ENCODE measurements at regions of chr16 and their contacts with region 1.

Region 1: DNA sequence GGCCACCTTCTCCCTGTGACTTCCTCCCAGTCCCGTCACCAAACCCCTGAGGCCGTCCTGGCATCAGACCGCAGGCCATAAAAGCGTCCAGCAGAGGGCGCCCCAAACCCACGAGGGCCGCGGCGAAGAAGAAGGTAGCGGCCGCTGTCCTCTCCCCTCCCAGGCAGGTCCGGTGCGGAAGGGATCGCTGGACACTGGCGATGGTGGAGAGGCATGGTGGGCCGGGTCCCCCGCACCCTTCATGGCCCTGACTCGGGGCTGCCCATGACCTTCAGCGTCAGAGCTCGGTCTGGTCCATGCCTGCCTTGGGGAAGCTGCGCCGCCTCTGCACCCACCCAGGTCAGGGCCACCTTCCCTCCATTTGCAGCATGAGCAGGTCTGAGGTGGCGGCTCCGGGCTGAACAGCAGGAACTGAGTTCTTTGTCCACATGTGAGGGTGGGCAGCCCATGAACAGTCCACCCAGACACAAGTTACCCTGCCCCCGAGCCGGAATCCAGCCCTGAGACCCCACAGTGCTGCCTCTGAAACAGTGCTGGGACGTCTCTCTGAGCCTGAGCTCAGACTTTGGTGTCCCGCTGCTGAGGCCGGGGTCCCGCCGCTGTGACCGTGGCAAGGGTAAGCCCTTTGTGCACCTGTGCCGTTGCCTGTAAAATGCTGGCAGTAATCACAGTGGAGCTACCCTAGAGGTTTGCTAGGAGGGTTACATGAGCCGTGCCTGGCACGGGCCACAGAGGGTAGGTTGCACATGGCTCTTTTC is 40.8 kb upstream of the CMIP start:
- DNase-seq: peak; percentile 89
- ATAC-seq: peak; percentile 56
- H3K4me3 ChIP-seq: no peak overlapping the region
- H3K27ac ChIP-seq: peak overlapping the region; percentile 99
- H3K4me1 ChIP-seq: peaks cover 48% of the 10 kb centered on the region
- H3K27me3 ChIP-seq: no peaks in the 10 kb centered on the region
- CTCF ChIP-seq: peak; percentile 80

Region 2: DNA sequence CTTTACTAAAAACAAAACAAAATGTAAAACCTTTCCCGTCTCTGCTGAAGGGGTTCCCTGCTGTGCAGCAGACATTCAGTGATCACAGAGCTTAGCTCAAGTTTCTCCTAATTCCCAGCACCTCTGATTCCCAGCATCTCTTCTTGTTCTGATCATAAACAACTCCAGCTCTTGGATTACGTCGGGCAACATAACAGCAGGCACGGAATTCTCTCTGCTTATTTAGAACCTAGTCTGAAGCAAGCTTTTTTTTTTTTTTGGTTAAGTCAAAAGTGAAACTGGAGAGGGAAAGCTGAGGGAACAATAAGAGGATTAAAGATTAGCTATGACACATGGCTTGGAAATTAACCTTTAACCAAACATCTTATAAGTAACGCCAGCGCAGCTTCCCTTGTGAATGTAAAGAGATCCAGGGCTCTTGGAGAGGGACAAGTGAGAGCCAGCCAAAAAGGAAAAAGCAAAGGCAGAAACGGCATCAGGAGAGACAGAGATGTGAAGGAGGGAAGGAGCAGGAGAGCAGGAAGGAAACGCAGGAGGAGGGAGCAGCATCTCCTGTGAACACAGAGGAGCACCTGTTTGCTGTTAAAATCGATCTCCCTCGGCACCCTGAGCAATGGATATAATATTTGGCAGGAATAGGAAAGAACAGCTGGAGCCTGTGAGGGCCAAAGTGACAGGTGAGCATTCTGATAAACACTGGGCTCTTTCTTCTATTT is 165.3 kb before region 1 on chr16 and contains the start of gene BCO1:
- CTCF ChIA-PET with region 1: no interaction called
- POLR2A ChIA-PET with region 1: no interaction called
- intact Hi-C with region 1: no loop called
- DNase-seq: peak; percentile 53
- ATAC-seq: peak; percentile 67
- H3K4me3 ChIP-seq: peak within 1 kb of the TSS; percentile 68
- H3K27ac ChIP-seq: no peak within 1 kb of the TSS
- H3K4me1 ChIP-seq: no peaks in the 10 kb centered on the region
- H3K27me3 ChIP-seq: no peaks in the 10 kb centered on the region
- CTCF ChIP-seq: no peak
- total RNA-seq, gene BCO1: not detected in 2 replicates

Region 3: GRCh38 chr16:81366316-81366932 is 37.4 kb before region 1 on chr16:
- CTCF ChIA-PET with region 1: interaction called, 18 read pairs
- POLR2A ChIA-PET with region 1: no interaction called
- intact Hi-C with region 1: no loop called
- DNase-seq: peak; percentile 68
- ATAC-seq: peak; percentile 59
- H3K4me3 ChIP-seq: no peak overlapping the region
- H3K27ac ChIP-seq: no peak overlapping the region
- H3K4me1 ChIP-seq: no peaks in the 10 kb centered on the region
- H3K27me3 ChIP-seq: no peaks in the 10 kb centered on the region
- CTCF ChIP-seq: peak; percentile 70

Region 4: GRCh38 chr16:81493755-81494433 is 90.1 kb after region 1 on chr16:
- CTCF ChIA-PET with region 1: interaction called, 3 read pairs
- POLR2A ChIA-PET with region 1: no interaction called
- intact Hi-C with region 1: loop called (anchors 5 kb)
- DNase-seq: peak; percentile 93
- ATAC-seq: peak; percentile 94
- H3K4me3 ChIP-seq: no peak overlapping the region
- H3K27ac ChIP-seq: peak overlapping the region; percentile 94
- H3K4me1 ChIP-seq: peaks cover 35% of the 10 kb centered on the region
- H3K27me3 ChIP-seq: no peaks in the 10 kb centered on the region
- CTCF ChIP-seq: no peak

Region 5: GRCh38 chr16:81585785-81586184 is 182.0 kb after region 1 on chr16:
- CTCF ChIA-PET with region 1: no interaction called
- POLR2A ChIA-PET with region 1: no interaction called
- intact Hi-C with region 1: loop called (anchors 5 kb)
- DNase-seq: peak; percentile 25
- ATAC-seq: no peak
- H3K4me3 ChIP-seq: no peak overlapping the region
- H3K27ac ChIP-seq: peak overlapping the region; percentile 95
- H3K4me1 ChIP-seq: peaks cover 65% of the 10 kb centered on the region
- H3K27me3 ChIP-seq: no peaks in the 10 kb centered on the region
- CTCF ChIP-seq: peak; percentile 52

Region 6: GRCh38 chr16:81723098-81723723 is 319.4 kb after region 1 on chr16:
- CTCF ChIA-PET with region 1: no interaction called
- POLR2A ChIA-PET with region 1: no interaction called
- intact Hi-C with region 1: loop called (anchors 2 kb)
- DNase-seq: peak; percentile 89
- ATAC-seq: peak; percentile 94
- H3K4me3 ChIP-seq: no peak overlapping the region
- H3K27ac ChIP-seq: no peak overlapping the region
- H3K4me1 ChIP-seq: no peaks in the 10 kb centered on the region
- H3K27me3 ChIP-seq: no peaks in the 10 kb centered on the region
- CTCF ChIP-seq: peak; percentile 72